A549 (cell line): ENCODE measurements at regions of chr17 and their contacts with region 1.

Region 1: GRCh38 chr17:74842599-74843351 is 16.9 kb downstream of the GRIN2C start:
- DNase-seq: peak; percentile 82 to 96
- ATAC-seq: peak; percentile 79 to 89
- H3K4me3 ChIP-seq: peak overlapping the region; percentile 50
- H3K27ac ChIP-seq: peak overlapping the region; percentile 82 to 89
- H3K4me1 ChIP-seq: peaks cover 4% of the 10 kb centered on the region; the same call in 1 of the 3 replicates
- CTCF ChIP-seq: peak; percentile 63
- EP300 ChIP-seq: no peak
- POLR2A ChIP-seq: peak; percentile 77
- RAD21 ChIP-seq: peak; percentile 41 to 61; a peak in 4 of 5 replicates

Region 2: GRCh38 chr17:74592087-74592990 is 250.4 kb before region 1 on chr17 and contains the start of gene CD300LD:
- CTCF ChIA-PET with region 1: no interaction called
- POLR2A ChIA-PET with region 1: no interaction called
- DNase-seq: no peak
- ATAC-seq: peak; percentile 62 to 79; a peak in 5 of 6 replicates
- H3K4me3 ChIP-seq: no peak within 1 kb of the TSS
- H3K27ac ChIP-seq: peak within 1 kb of the TSS in 1 of 2 experiments; percentile 47; a peak in 1 of 6 replicates
- H3K4me1 ChIP-seq: 0 out of 3 replicates have a peak, but pooled peaks cover 3% of the 10 kb centered on the region
- CTCF ChIP-seq: no peak
- EP300 ChIP-seq: no peak
- POLR2A ChIP-seq: no peak
- RAD21 ChIP-seq: no peak
- polyA plus RNA-seq, gene CD300LD: not detected in 2 replicates

Region 3: GRCh38 chr17:74776044-74776977 is 66.5 kb before region 1 on chr17 and contains the start of gene NAT9:
- CTCF ChIA-PET with region 1: interaction called, 1,302 read pairs
- POLR2A ChIA-PET with region 1: interaction called, 15 read pairs
- DNase-seq: peak; percentile 97 to 99
- ATAC-seq: peak; percentile 84 to 92
- H3K4me3 ChIP-seq: peak within 1 kb of the TSS; percentile 69
- H3K27ac ChIP-seq: peak within 1 kb of the TSS; percentile 89 to 92
- H3K4me1 ChIP-seq: peaks cover 31% of the 10 kb centered on the region
- CTCF ChIP-seq: no peak
- EP300 ChIP-seq: no peak
- POLR2A ChIP-seq: peak; percentile 91
- RAD21 ChIP-seq: no peak
- polyA plus RNA-seq, gene NAT9: 42.9 and 43.4 TPM in 2 replicates

Region 4: GRCh38 chr17:74972107-74972972 is 129.6 kb after region 1 on chr17 and contains the start of gene HID1:
- CTCF ChIA-PET with region 1: no interaction called
- POLR2A ChIA-PET with region 1: no interaction called
- DNase-seq: peak; percentile 56 to 88
- ATAC-seq: peak; percentile 83 to 85
- H3K4me3 ChIP-seq: peak within 1 kb of the TSS; percentile 71
- H3K27ac ChIP-seq: peak within 1 kb of the TSS; percentile 77 to 84
- H3K4me1 ChIP-seq: peaks cover 9% of the 10 kb centered on the region
- CTCF ChIP-seq: no peak
- EP300 ChIP-seq: no peak
- POLR2A ChIP-seq: no peak; the same call in 1 of the 2 replicates
- RAD21 ChIP-seq: no peak
- polyA plus RNA-seq, gene HID1: 11.7 and 15.2 TPM in 2 replicates